Naive thymus-derived CD8-positive, alpha-beta T cell (primary cell): ENCODE measurements at regions of chr7 and their contacts with region 1.

Region 1: GRCh38 chr7:56106108-56107073 is at the start of gene CHCHD2:
- DNase-seq: peak; percentile 79 to 97 (median 92)
- ATAC-seq: peak; percentile 95 to 97
- H3K4me3 Mint-ChIP-seq: peak within 1 kb of the TSS; percentile 92 to 98 (median 96)
- H3K27ac Mint-ChIP-seq: peak within 1 kb of the TSS; percentile 97 to 100 (median 99)
- H3K4me1 Mint-ChIP-seq: peaks cover 11 to 44% (median 37%) of the 10 kb centered on the region in 4 donors
- H3K27me3 Mint-ChIP-seq: peaks cover 0 to 3% (median 0%) of the 10 kb centered on the region in 5 donors
- polyA plus RNA-seq, gene CHCHD2: 415 to 515 (median 454) TPM

Region 2: GRCh38 chr7:55992346-55992745 is 114.0 kb before region 1 on chr7:
- POLR2A ChIA-PET with region 1: no interaction called
- DNase-seq: no peak
- ATAC-seq: no peak
- H3K4me3 Mint-ChIP-seq: no peak overlapping the region
- H3K27ac Mint-ChIP-seq: peak overlapping the region in 1 of 10 donors; percentile 66
- H3K4me1 Mint-ChIP-seq: no peaks in the 10 kb centered on the region
- H3K27me3 Mint-ChIP-seq: no peaks in the 10 kb centered on the region

Region 3: GRCh38 chr7:56051339-56052191 is 54.8 kb before region 1 on chr7 and contains the starts of genes CCT6A and PSPH:
- POLR2A ChIA-PET with region 1: interaction called, 11 read pairs
- DNase-seq: peak; percentile 69 to 91 (median 84)
- ATAC-seq: peak; percentile 85 to 94
- H3K4me3 Mint-ChIP-seq: peak within 1 kb of the TSS; percentile 91 to 99 (median 96)
- H3K27ac Mint-ChIP-seq: peak within 1 kb of the TSS; percentile 82 to 97 (median 96)
- H3K4me1 Mint-ChIP-seq: peaks cover 4 to 44% (median 32%) of the 10 kb centered on the region in 4 donors
- H3K27me3 Mint-ChIP-seq: no peaks in the 10 kb centered on the region
- polyA plus RNA-seq, gene CCT6A: 86.8 to 103 (median 97.5) TPM
- polyA plus RNA-seq, gene PSPH: 5.7 to 8.0 (median 6.9) TPM

Region 4: GRCh38 chr7:56079450-56080185 is 26.8 kb before region 1 on chr7:
- POLR2A ChIA-PET with region 1: no interaction called
- DNase-seq: no peak
- ATAC-seq: no peak
- H3K4me3 Mint-ChIP-seq: no peak overlapping the region
- H3K27ac Mint-ChIP-seq: peak overlapping the region in 3 of 10 donors; percentile 5 to 82 (median 53)
- H3K4me1 Mint-ChIP-seq: peaks cover 0 to 3% (median 2%) of the 10 kb centered on the region in 4 donors
- H3K27me3 Mint-ChIP-seq: no peaks in the 10 kb centered on the region

Region 5: DNA sequence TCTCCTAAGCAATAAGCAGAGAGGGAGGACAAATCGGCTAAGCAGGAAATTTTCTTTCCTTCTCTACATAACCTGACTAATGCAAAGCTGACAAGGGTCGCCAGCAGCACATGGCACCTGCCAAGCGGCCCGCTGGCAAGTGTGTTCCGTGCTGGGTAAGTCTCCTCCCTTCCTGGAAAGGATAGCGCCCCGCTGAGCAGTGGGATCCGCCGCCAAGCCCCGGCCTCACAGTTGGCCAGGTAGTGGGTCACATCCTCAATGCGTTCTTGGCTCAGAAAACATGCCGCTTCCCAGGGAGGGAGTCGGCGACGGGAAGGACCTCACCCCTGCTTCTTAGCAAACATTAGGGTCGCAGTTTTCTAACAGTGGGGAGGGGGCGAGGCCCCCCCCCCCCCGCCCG is 498.8 kb after region 1 on chr7:
- POLR2A ChIA-PET with region 1: no interaction called
- DNase-seq: no peak
- ATAC-seq: no peak
- H3K4me3 Mint-ChIP-seq: no peak overlapping the region
- H3K27ac Mint-ChIP-seq: no peak overlapping the region
- H3K4me1 Mint-ChIP-seq: no peaks in the 10 kb centered on the region
- H3K27me3 Mint-ChIP-seq: no peaks in the 10 kb centered on the region